ENCODE measurements at regions of chr3 and their contacts with region 1.

Region 1: GRCh38 chr3:94336046-94336710 is 273.3 kb downstream of the NSUN3 start:
- DNase-seq: no peak
- H3K4me3 ChIP-seq: no peak overlapping the region
- H3K27ac ChIP-seq: no peak overlapping the region
- H3K4me1 ChIP-seq: no peaks in the 10 kb centered on the region
- H3K27me3 ChIP-seq: no peaks in the 10 kb centered on the region
- CTCF ChIP-seq: no peak

Region 2: GRCh38 chr3:94249585-94249984 is 86.6 kb before region 1 on chr3:
- intact Hi-C with region 1: loop called (anchors 10 kb)
- DNase-seq: peak; percentile 76
- H3K4me3 ChIP-seq: no peak overlapping the region
- H3K27ac ChIP-seq: no peak overlapping the region
- H3K4me1 ChIP-seq: no peaks in the 10 kb centered on the region
- H3K27me3 ChIP-seq: no peaks in the 10 kb centered on the region
- CTCF ChIP-seq: peak; percentile 78

Region 3: DNA sequence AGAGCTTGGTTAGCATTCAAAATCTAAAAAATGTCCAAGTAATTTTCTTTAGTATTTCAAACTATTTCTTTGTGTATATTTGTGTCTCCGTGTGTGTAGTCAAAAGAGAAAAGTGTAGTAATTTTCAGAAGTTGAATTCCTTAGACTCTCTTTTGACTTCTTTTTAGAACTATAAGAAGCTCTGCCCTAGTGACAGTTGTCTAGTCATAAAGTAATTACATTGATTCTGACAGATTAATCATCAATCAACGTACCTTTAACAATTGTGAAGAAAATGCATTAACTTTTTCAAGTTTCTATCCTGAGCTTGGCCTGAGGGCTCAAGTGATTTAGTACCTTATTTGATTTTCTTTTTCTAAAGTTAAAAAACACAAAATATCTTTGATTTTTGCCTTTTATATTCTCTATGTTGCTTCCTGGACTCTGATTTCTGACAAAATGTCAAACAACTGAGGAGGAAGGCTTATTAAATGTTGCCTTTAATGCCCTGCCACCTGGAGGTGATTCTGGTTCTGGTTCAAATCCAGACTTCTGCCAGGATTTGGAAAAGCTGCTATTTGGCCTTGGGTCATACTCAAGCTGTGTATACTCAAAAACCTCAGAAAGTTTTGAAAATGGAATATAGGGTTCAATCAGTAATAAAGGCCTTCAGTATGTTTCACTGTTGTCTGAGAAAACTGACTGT is 380.3 kb after region 1 on chr3:
- intact Hi-C with region 1: loop called (anchors 5 kb)
- DNase-seq: peak; percentile 22
- H3K4me3 ChIP-seq: no peak overlapping the region
- H3K27ac ChIP-seq: no peak overlapping the region
- H3K4me1 ChIP-seq: no peaks in the 10 kb centered on the region
- H3K27me3 ChIP-seq: no peaks in the 10 kb centered on the region
- CTCF ChIP-seq: peak; percentile 43

Measured in colonic mucosa (tissue), 4 donors.